AG04450 (cell line): ENCODE measurements at regions of chr2 and their contacts with region 1.

Region 1: GRCh38 chr2:230987137-230988020 is 8.5 kb upstream of the SPATA3 start:
- DNase-seq: peak; percentile 15
- H3K4me3 ChIP-seq: peak overlapping the region; percentile 56
- H3K27ac ChIP-seq: no peak overlapping the region
- H3K27me3 ChIP-seq: peaks cover 28% of the 10 kb centered on the region
- CTCF ChIP-seq: peak; percentile 91

Region 2: DNA sequence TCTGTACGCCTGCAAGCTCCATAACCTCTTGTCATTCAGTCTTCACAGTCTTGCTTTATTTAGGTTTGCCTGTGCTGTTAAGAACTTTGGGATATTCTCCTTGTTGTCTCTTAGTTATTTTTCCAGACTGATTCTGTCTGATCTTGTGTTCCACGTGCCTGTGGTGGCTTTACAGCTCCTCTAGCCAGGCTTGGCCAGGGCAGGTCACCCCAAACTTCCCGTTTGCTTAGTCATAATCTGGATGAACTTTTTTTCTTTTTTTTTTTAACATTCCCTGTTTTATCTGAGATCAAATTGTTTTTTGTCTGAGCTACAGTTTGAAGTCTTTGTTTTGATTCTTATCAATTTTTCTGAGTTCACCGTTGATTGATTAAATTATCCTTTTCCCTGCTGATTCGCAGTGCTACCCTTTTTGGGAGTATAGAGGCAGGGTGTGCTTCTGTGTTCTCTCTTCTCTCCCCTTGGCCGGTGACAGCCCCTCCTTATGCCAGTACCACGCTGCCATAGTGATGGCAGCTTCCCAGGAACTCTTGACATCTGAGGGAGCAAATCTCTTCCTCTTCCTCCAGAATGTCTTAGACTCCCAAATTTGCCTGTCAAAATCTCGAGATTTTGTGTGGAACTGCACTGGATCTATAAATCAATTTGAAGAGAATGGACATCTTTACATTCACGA is 568.9 kb before region 1 on chr2:
- CTCF ChIA-PET with region 1: no interaction called
- POLR2A ChIA-PET with region 1: no interaction called
- DNase-seq: no peak
- H3K4me3 ChIP-seq: peak overlapping the region; percentile 81
- H3K27ac ChIP-seq: no peak overlapping the region
- H3K27me3 ChIP-seq: no peaks in the 10 kb centered on the region
- CTCF ChIP-seq: no peak

Region 3: DNA sequence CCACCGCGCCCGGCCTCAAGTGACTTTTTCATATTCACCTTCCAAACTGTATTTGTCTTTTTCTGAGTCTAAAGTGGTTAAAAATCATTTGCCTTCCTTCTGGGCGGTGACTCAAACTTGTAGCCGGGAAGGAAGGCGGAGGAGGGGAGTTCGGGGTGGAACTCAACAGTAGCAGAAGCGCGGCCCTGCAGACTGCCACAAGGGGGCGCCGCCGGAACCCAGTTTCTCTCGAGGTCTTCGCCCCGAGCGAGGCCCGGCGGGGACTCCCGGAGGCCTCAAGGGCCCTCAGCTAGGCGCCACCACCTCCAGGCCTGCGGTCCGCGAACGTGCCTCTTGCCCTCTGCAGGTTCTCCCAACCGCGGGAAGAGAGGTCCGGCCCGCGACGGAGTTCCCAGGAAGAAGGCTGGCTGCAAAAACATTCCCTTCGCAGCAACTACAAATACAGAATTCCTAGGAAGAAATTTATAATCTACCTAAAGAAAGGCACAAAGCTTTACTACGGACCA is 139.4 kb before region 1 on chr2:
- CTCF ChIA-PET with region 1: interaction called, 33 read pairs
- POLR2A ChIA-PET with region 1: no interaction called
- DNase-seq: peak; percentile 44
- H3K4me3 ChIP-seq: no peak overlapping the region; the same call in 1 of the 2 replicates
- H3K27ac ChIP-seq: no peak overlapping the region
- H3K27me3 ChIP-seq: peaks cover 22% of the 10 kb centered on the region
- CTCF ChIP-seq: peak; percentile 85

Region 4: DNA sequence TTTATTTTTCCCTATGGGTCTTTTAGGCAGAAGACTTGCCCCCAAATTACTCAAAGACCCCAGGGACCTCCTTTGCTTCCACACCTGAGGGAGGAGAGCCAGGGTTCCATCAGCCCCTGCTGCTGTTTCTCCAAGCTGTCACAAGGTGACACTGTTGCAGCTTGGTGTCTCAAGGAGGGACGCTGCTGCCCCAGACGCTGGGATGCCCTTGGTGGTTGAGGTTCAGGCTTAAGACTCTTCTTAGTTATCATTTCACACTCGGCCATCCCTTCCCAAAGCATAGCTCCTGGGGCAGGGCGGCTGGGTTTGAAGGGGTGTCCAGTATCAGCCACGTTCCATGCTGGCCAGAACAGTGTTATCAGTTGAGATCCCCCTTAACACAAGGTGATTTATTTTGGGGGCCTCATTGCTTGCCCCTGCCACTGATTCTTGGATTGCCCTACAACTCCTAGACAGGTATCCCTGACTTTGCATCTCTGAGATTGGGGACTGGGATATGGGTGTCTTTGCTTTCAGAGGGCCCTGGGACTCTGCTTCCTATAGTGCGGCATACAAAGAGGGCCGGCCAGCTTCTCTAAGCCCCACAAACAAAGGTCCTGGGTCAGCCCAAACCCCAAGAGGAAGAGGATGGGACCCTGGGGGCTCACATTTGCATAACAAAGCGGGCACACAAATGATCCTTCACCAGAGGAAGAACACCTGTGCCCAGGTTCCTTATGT is 85.0 kb before region 1 on chr2:
- CTCF ChIA-PET with region 1: interaction called, 184 read pairs
- POLR2A ChIA-PET with region 1: no interaction called
- DNase-seq: peak; percentile 42
- H3K4me3 ChIP-seq: no peak overlapping the region
- H3K27ac ChIP-seq: no peak overlapping the region
- H3K27me3 ChIP-seq: peaks cover 30% of the 10 kb centered on the region
- CTCF ChIP-seq: peak; percentile 95

Region 5: DNA sequence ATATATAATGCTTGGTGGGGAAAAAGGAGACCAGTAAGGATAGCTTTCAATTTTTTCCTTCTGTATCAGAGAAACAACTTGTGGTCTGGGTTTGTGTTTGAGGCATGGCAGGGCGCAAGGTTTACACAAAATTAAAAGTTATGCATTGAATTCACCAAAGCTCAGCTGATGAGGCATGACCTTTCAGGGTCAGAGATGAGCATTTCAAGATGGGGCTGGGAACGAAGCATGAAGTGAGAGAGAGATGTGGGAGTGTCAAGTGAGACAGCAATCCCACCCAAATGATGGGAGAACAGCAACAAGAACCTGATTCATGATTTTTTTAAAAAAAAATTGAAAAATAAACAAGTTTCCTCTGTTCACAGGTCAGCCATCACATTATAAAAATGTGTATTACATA is 67.2 kb before region 1 on chr2:
- CTCF ChIA-PET with region 1: no interaction called
- POLR2A ChIA-PET with region 1: no interaction called
- DNase-seq: no peak
- H3K4me3 ChIP-seq: no peak overlapping the region
- H3K27ac ChIP-seq: no peak overlapping the region
- H3K27me3 ChIP-seq: peaks cover 29% of the 10 kb centered on the region
- CTCF ChIP-seq: no peak

Region 6: DNA sequence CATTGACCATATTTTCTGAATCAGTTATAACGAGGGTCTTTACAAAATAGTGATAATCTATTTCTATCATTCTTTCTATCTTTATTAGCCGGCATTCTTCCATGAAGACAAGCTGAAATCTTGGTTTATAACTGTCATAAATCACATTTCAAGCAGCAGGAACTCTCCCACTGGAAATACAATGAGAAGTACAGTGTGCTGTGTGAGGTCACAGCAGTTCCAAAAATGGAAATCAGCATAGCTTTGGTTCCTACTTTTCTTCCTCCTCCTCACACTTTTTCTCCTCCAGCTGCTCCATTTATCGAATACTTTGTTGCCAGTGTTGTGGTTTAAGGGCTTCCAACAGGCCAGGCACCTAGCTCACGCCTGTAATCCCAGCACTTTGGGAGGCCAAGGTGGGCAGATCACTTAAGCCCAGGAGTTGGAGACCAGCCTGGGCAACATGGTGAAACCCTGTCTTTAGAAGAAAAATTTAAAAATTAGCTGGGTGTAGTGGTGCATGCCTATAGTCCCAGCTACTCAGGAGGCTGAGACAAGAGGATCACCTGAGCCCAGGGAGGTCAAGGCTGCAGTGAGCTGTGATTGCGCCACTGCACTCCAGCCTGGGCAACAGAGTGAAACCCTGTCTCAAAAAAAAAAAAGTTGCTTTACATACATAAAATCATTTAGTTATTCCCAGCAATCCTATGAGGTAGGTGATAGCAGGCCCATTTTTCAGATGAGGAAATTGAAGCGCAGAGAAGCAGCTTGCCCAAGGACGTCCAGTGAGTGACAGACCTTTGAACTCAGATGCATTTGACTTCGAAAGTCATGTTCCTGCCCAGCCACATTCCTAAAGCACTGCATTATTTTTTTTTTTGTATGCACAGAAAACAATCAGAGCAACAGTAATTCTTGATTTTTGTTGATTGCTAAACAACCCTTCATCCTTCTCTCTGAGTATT is 28.3 kb before region 1 on chr2:
- CTCF ChIA-PET with region 1: interaction called, 11 read pairs
- POLR2A ChIA-PET with region 1: no interaction called
- DNase-seq: no peak
- H3K4me3 ChIP-seq: no peak overlapping the region
- H3K27ac ChIP-seq: no peak overlapping the region
- H3K27me3 ChIP-seq: peaks cover 26% of the 10 kb centered on the region
- CTCF ChIP-seq: no peak